Dorsolateral prefrontal cortex (tissue), 120 donors: ENCODE measurements at regions of chr3 and their contacts with region 1.

Region 1: GRCh38 chr3:25664810-25665314 is at the start of gene TOP2B:
- DNase-seq: peak; percentile 95 to 98 (median 97)
- H3K4me3 ChIP-seq: peak within 1 kb of the TSS; percentile 61 to 92 (median 80)
- H3K27ac ChIP-seq: peak within 1 kb of the TSS; percentile 88 to 99 (median 98)
- H3K27me3 ChIP-seq: no peaks in the 10 kb centered on the region
- CTCF ChIP-seq: peak in 10 of 56 donors; percentile 6 to 25 (median 14)
- total RNA-seq, gene TOP2B: 80.7 to 162 (median 127) TPM

Region 2: DNA sequence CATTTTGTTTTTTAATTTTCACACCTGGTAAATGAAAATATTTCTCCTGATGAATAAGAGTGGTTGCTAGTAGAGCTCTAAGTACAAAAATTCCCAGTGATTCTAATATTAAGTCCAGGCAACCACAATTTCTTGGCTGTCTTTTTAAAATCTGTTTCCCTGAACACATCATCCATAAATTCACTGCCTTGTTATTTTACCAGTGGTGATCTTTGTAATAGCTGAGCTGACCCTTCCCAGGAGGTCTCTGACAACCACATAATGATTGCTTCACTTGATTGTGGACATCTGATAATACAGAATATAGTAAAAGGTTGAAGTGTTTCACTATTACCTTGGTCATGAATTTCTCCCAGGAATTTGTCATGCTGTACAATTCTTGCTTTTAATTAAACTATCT is 13.7 kb after region 1 on chr3:
- intact Hi-C with region 1: loop called in 1 of 2 experiments (anchors 2 kb)
- DNase-seq: no peak
- H3K4me3 ChIP-seq: peak overlapping the region in 34 of 59 donors; percentile 3 to 59 (median 32)
- H3K27ac ChIP-seq: peak overlapping the region in 56 of 59 donors; percentile 28 to 91 (median 79)
- H3K27me3 ChIP-seq: peaks cover 0 to 3% (median 0%) of the 10 kb centered on the region in 45 donors
- CTCF ChIP-seq: no peak

Region 3: DNA sequence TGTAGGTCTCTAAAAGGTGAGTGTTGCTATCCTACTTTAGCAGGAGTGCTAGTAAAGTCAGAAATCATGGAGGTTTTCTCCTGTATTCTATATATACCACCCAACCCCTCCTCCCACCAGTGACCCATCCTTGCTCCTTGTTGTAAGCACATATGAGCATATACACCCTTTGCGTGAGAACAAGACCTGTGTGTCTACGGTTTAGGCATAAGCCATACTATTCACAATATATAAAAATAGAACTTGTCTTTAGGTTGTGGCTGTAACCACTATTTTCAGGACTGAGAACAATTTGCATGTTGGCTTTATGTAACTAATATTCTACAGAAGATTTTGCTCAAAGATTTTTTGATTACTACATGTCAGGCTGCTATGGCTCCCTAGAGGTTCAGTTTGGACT is 58.9 kb after region 1 on chr3:
- intact Hi-C with region 1: no loop called
- DNase-seq: no peak
- H3K4me3 ChIP-seq: no peak overlapping the region
- H3K27ac ChIP-seq: no peak overlapping the region
- H3K27me3 ChIP-seq: no peaks in the 10 kb centered on the region
- CTCF ChIP-seq: no peak

Region 4: GRCh38 chr3:25782938-25783660 is 118.2 kb after region 1 on chr3 and contains the start of gene NGLY1:
- intact Hi-C with region 1: loop called (anchors 2 to 5 kb)
- DNase-seq: peak; percentile 64 to 93 (median 80)
- H3K4me3 ChIP-seq: peak within 1 kb of the TSS; percentile 67 to 98 (median 92)
- H3K27ac ChIP-seq: peak within 1 kb of the TSS; percentile 24 to 93 (median 82)
- H3K27me3 ChIP-seq: no peaks in the 10 kb centered on the region
- CTCF ChIP-seq: peak in 27 of 56 donors; percentile 8 to 50 (median 31)
- total RNA-seq, gene NGLY1: 25.1 to 68.9 (median 36.2) TPM